Ovary (tissue), 10 donors: ENCODE measurements at regions of chr6 and their contacts with region 1.

Region 1: GRCh38 chr6:36743538-36744303 is 46.1 kb downstream of the RAB44 start:
- DNase-seq: no peak
- H3K4me3 ChIP-seq: no peak overlapping the region
- H3K27ac ChIP-seq: no peak overlapping the region
- H3K4me1 ChIP-seq: no peaks in the 10 kb centered on the region
- H3K27me3 ChIP-seq: no peaks in the 10 kb centered on the region
- CTCF ChIP-seq: no peak
- EP300 ChIP-seq: no peak
- POLR2A ChIP-seq: no peak

Region 2: DNA sequence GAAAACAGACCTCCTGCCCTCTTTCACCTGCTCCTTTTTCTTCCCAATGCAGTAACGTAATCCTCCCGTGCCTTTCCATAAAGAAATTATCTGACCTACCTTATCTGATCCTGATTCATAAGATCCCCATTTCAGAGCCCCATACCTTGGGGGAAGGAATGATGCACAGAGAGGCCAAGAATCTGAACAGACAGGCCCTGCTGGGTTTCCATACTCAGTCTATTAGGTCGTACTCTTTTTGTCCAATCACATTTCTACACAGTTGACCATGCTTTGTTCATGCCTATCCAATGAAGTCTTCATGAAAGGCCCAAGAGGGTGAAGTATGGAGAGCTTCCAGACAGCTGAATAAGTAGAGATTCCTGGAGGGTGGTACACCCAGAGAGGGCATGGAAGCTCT is 848.2 kb before region 1 on chr6:
- intact Hi-C with region 1: no loop called
- DNase-seq: no peak
- H3K4me3 ChIP-seq: no peak overlapping the region
- H3K27ac ChIP-seq: no peak overlapping the region
- H3K4me1 ChIP-seq: no peaks in the 10 kb centered on the region
- H3K27me3 ChIP-seq: no peaks in the 10 kb centered on the region
- CTCF ChIP-seq: no peak
- EP300 ChIP-seq: no peak
- POLR2A ChIP-seq: no peak

Region 3: GRCh38 chr6:36615018-36615761 is 128.5 kb before region 1 on chr6:
- intact Hi-C with region 1: loop called in 1 of 4 experiments (anchors 10 kb)
- DNase-seq: peak in 4 of 5 donors; percentile 20 to 60 (median 39)
- H3K4me3 ChIP-seq: no peak overlapping the region
- H3K27ac ChIP-seq: no peak overlapping the region
- H3K4me1 ChIP-seq: no peaks in the 10 kb centered on the region
- H3K27me3 ChIP-seq: no peaks in the 10 kb centered on the region
- CTCF ChIP-seq: peak; percentile 38 to 63 (median 58)
- EP300 ChIP-seq: no peak
- POLR2A ChIP-seq: no peak

Region 4: GRCh38 chr6:36888654-36889481 is 145.1 kb after region 1 on chr6:
- intact Hi-C with region 1: no loop called
- DNase-seq: no peak
- H3K4me3 ChIP-seq: no peak overlapping the region
- H3K27ac ChIP-seq: no peak overlapping the region
- H3K4me1 ChIP-seq: peaks cover 3% of the 10 kb centered on the region
- H3K27me3 ChIP-seq: no peaks in the 10 kb centered on the region
- CTCF ChIP-seq: no peak
- EP300 ChIP-seq: no peak
- POLR2A ChIP-seq: no peak